ENCODE measurements at regions of chr14 and their contacts with region 1.

Region 1: GRCh38 chr14:63276492-63277342 is 42.0 kb downstream of the GPHB5 start:
- DNase-seq: no peak

Region 2: DNA sequence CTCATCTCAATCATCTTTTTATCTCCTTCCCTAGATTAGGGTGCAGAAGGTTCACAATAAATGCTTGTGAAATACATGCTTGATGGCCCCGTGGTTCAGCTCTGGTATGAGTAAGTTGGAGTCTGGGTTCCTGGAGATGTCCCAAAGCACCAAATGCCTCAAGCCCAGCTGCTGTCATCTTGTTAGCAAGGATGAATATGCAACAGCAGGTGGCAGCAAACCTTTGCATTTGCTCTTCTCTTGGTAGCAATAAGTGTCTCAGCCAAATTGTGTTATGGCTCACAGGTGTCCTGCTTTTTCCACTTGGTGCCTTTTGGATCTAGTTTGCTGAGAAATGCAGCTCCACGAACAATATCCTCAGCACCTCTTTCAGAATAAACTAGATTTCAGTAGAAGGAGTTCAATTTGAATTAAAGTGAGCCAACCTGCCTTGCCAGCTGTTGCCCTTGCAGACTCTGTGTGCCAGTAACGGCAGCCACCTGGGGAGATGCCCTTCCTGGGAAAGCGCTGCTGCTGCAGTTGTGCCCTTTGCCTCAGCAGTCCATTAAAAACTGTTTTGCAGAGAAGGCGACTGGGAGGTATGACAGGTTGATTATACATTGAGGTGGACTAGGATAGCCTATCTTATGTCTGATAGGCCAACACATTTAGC is 1097.2 kb before region 1 on chr14:
- intact Hi-C with region 1: loop called (anchors 2 kb)
- DNase-seq: no peak

Region 3: DNA sequence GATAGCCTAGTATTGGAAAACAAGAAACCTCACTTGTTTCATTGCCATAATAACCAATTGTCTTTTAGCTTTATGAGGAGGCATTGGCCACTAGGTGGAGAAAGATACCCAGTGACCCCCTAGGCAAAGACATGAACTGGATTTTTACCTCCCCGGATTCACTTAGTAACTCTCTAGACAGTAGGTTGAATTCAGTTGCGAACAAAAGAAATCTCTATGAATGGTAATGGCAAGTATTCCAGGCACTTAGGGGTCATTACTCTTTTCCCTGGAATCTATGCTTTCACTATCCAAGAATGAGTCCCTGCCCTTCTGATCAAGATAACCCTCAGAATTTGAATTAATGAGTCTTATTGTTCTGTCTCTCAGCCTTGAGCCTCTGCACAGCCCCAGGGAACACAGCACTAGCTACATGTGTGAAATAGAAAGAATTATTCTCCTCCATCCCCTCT is 101.9 kb before region 1 on chr14:
- intact Hi-C with region 1: loop called (anchors 2 kb)
- DNase-seq: no peak

Region 4: DNA sequence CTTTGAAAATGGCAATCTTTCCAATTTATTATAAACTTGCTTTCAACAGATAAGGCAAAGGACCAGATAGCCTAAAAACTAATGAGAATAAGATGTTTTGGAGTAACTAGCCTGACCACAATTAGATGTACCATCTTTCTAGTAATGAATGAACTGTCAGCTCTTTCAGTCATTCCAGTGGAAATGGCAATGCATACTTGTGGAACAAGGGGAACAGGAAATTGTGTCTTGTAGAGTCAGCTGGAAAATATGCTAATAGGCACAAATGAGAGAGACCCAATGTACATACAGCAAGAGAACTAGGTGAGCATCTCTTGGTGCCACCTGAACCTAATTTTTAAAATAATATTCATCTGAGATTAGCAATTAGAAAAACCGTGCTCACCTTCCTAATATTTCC is 118.1 kb after region 1 on chr14:
- intact Hi-C with region 1: no loop called
- DNase-seq: no peak